ENCODE measurements at regions of chr15 and their contacts with region 1.

Region 1: DNA sequence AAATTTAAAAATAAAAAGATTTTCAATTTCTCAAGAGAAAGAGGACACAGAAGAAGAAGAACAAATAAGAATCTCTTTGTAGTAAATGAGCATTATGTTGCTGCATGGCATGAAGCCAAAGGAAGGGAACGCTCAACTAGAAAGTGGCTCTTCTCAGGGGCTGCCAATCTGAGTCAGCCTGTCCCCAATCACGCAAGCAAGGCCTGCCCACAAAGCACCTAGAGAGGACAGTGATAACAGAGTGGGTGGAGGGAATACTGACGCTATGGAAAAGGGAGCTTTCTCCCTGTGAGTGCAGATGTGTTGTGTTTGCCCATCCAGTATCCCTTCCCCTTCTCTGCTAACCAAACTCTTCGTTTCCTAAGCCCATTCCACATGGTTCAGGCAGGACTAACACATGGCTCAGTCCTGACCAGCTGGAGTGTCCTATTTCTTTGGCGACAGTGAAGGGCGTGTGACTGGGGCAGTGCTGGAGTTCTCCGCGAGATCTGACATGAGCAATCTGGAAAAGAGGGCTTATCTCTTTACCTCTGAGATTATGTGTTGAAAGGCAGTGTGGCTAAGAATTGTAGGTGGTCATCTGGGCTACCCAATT is 14.2 kb downstream of the FBN1 start:
- DNase-seq: peak in 3 of 10 donors; percentile 21 to 57 (median 25)
- H3K4me3 ChIP-seq: peak overlapping the region in 5 of 59 donors; percentile 19 to 40 (median 22)
- H3K27ac ChIP-seq: peak overlapping the region in 3 of 59 donors; percentile 33 to 43 (median 43)
- H3K27me3 ChIP-seq: no peaks in the 10 kb centered on the region
- CTCF ChIP-seq: no peak

Region 2: GRCh38 chr15:48560321-48561051 is 70.8 kb before region 1 on chr15:
- intact Hi-C with region 1: loop called in 1 of 2 experiments (anchors 5 kb)
- DNase-seq: no peak
- H3K4me3 ChIP-seq: no peak overlapping the region
- H3K27ac ChIP-seq: peak overlapping the region in 3 of 59 donors; percentile 5 to 26 (median 18)
- H3K27me3 ChIP-seq: no peaks in the 10 kb centered on the region
- CTCF ChIP-seq: no peak